Esophagus muscularis mucosa (tissue), 4 donors: ENCODE measurements at regions of chr4 and their contacts with region 1.

Region 1: GRCh38 chr4:76067652-76068286 is 6.7 kb upstream of the ART3 start:
- DNase-seq: no peak
- H3K4me3 ChIP-seq: no peak overlapping the region
- H3K27ac ChIP-seq: no peak overlapping the region
- H3K4me1 ChIP-seq: no peaks in the 10 kb centered on the region
- H3K27me3 ChIP-seq: no peaks in the 10 kb centered on the region
- CTCF ChIP-seq: peak; percentile 82 to 89 (median 83)
- EP300 ChIP-seq: no peak
- POLR2A ChIP-seq: no peak

Region 2: DNA sequence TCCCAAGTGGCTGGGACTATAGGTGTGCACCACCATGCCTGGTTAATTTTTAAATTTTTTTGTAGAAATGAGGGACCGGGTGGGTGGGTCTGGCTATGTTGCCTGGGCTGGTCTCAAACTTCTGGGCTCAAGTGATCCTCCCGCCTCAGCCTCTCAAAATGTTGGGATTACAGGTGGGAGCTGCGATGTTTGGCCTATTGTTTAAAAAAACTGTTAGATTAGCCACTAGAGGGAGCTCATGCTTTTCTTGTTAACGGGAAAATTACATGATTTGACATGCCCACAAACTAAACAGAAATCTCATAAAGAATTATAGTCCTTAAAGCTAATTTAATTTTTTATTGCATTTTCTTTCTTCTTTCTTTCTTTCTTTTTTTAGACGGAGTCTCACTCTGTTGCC is 72.0 kb before region 1 on chr4:
- intact Hi-C with region 1: loop called (anchors 1 kb)
- DNase-seq: peak; percentile 47
- H3K4me3 ChIP-seq: no peak overlapping the region
- H3K27ac ChIP-seq: no peak overlapping the region
- H3K4me1 ChIP-seq: peaks cover 0 to 6% (median 5%) of the 10 kb centered on the region in 4 donors
- H3K27me3 ChIP-seq: no peaks in the 10 kb centered on the region
- CTCF ChIP-seq: peak; percentile 66 to 72 (median 67)
- EP300 ChIP-seq: no peak
- POLR2A ChIP-seq: no peak